Right cardiac atrium (tissue), 5 donors: ENCODE measurements at regions of chr1 and their contacts with region 1.

Region 1: DNA sequence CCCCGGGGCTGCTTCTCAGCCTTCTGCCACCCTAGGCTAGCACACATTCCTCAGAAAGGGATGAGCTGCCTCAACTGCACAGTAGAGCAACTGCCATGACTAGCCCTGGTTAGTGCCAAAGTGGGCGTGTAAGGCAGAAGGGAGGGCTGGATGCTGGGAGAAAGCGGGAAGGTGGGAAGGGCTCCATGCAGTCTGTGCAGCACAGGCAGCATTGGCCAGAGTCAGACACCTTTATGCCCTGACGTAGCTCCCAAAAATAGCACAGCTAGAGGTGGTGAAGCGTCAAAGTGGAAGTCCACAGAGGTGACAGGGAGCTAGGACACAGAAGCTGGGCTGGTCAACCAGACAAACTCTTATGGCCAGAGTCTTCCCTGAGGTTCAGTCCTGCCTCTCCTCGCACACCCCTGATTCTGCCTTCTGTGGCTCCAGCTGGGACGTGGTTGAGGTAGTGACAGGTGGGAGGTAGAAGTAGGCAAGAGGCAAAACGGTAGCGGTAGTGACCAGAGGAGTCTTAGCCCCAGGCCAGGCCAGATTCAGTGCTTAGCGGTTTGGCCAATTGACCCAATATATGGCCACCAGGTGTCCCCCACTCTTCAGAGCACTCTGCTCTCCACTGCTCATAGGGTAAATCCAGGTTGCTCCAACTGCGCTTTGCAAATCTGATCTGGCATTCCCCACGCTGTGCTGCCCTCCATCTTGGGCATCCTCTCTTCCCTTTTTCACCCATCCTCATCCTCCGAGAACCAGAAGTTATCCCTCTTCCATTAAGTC is 45.6 kb downstream of the DDX20 start:
- DNase-seq: peak; percentile 37 to 68 (median 65)
- ATAC-seq: peak; percentile 84
- H3K4me3 ChIP-seq: no peak overlapping the region
- H3K27ac ChIP-seq: peak overlapping the region; percentile 71
- H3K4me1 ChIP-seq: no peaks in the 10 kb centered on the region
- H3K27me3 ChIP-seq: no peaks in the 10 kb centered on the region

Region 2: GRCh38 chr1:111878646-111879045 is 77.4 kb after region 1 on chr1:
- intact Hi-C with region 1: loop called in 1 of 4 experiments (anchors 5 kb)
- DNase-seq: no peak
- ATAC-seq: no peak
- H3K4me3 ChIP-seq: no peak overlapping the region
- H3K27ac ChIP-seq: no peak overlapping the region
- H3K4me1 ChIP-seq: peaks cover 17% of the 10 kb centered on the region
- H3K27me3 ChIP-seq: no peaks in the 10 kb centered on the region